ENCODE measurements at regions of chr18 and their contacts with region 1.

Region 1: DNA sequence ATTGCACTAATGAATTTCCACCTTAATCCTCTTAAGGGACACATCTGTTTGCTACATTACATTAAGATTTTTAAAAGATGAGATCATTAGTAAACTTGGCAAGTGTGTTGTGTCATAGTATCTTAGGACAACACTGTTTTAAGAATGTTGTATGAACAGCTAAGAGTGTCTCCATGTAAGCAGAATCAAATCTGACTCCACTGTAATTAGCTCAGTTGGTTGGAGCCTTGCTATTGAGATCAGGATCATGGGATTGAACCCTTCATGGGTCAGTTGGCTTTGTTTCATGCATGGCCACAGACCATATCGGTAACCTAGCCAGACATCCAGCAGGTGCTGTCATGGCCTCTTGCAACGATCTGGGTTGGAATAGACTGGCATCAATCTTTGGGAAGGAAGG is 5.2 kb downstream of the FHOD3 start:
- DNase-seq: no peak
- ATAC-seq: no peak
- H3K4me3 ChIP-seq: no peak overlapping the region
- H3K27ac ChIP-seq: peak overlapping the region in 6 of 12 donors; percentile 15 to 65 (median 44)
- H3K4me1 ChIP-seq: peaks cover 0 to 62% (median 20%) of the 10 kb centered on the region in 12 donors
- H3K27me3 ChIP-seq: peaks cover 0 to 43% (median 9%) of the 10 kb centered on the region in 9 donors
- CTCF ChIP-seq: no peak
- POLR2A ChIP-seq: no peak

Region 2: GRCh38 chr18:36372903-36373311 is 70.2 kb after region 1 on chr18:
- intact Hi-C with region 1: loop called in 2 of 10 experiments (anchors 5 kb)
- DNase-seq: peak in 1 of 5 donors; percentile 34
- ATAC-seq: peak in 3 of 4 donors; percentile 37 to 74 (median 56)
- H3K4me3 ChIP-seq: no peak overlapping the region
- H3K27ac ChIP-seq: peak overlapping the region in 7 of 12 donors; percentile 4 to 68 (median 27)
- H3K4me1 ChIP-seq: peaks cover 0 to 71% (median 11%) of the 10 kb centered on the region in 12 donors
- H3K27me3 ChIP-seq: peaks cover 0 to 2% (median 0%) of the 10 kb centered on the region in 9 donors
- CTCF ChIP-seq: peak in 3 of 12 donors; percentile 11 to 23 (median 12)
- POLR2A ChIP-seq: no peak